Tibial artery (tissue), 4 donors: ENCODE measurements at regions of chr22 and their contacts with region 1.

Region 1: DNA sequence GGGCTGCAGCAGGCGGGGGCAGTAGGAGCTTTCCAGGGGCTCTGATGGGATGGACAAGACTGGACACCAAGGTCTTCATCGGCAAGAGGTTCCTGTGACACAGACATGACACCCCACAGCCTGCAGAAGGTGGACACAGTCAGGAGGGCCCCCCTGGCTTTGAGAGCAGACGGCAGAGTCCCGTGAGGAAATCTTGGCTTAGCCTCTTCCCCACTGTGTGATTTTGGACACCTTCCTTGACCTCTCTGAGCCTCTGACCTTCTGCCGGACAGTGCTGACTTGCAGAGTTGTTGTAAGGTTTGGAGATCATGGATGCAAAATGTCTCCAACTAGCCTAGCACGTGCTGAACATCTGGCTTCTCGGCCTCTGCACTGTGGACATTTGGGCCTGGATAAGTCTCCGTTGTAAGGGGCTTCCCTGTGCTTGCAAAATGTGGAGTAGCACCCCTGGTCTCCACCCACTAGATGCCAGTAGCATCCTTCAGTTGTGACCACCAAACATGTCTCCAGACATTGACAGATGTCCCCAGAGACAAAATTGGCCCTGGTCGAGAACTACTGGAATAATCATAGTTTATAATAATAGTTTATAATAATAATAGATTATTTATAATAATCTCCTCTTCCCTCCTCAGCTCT is 54.6 kb downstream of the MCM5 start:
- DNase-seq: no peak
- H3K4me3 ChIP-seq: no peak overlapping the region
- H3K27ac ChIP-seq: no peak overlapping the region
- H3K4me1 ChIP-seq: no peaks in the 10 kb centered on the region
- H3K27me3 ChIP-seq: no peaks in the 10 kb centered on the region
- CTCF ChIP-seq: peak in 1 of 2 experiments; percentile 18

Region 2: DNA sequence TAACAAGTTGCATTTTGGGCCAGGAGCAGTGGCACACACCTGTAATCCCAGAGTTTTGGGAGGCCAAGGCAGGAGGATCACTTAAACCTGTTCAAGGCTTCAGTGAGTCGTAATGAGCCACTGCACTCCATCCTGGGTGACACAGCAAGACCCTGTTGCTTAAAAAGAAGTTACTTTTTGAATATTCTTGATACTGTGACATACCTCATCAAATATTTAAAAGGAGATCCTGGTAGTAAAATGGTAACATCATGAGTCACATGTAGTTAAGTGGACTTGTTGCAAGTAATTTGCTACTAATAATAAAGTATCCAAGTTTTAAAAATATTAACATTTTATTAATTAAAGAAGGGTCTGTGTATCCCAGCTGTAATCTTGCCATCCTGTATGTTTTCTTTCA is 179.0 kb before region 1 on chr22:
- intact Hi-C with region 1: no loop called
- DNase-seq: no peak
- H3K4me3 ChIP-seq: no peak overlapping the region
- H3K27ac ChIP-seq: no peak overlapping the region
- H3K4me1 ChIP-seq: no peaks in the 10 kb centered on the region
- H3K27me3 ChIP-seq: no peaks in the 10 kb centered on the region
- CTCF ChIP-seq: no peak

Region 3: DNA sequence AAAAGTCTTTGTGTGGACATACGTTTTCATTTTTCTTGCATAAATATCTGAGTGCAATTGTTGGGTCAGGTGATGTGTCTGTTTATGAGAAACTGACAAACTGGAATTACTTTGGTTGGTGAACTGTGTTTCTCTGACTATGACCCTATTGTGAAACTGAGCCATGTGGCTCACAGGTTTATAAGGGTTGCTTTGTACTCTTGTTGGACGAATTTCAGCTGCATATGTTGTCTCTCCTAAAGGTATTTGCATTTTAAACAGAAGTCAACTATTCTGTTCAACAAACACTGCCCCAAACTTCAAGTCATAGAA is 51.7 kb after region 1 on chr22:
- intact Hi-C with region 1: loop called (anchors 5 kb)
- DNase-seq: no peak
- H3K4me3 ChIP-seq: no peak overlapping the region
- H3K27ac ChIP-seq: no peak overlapping the region
- H3K4me1 ChIP-seq: no peaks in the 10 kb centered on the region
- H3K27me3 ChIP-seq: peaks cover 0 to 30% of the 10 kb centered on the region in 2 donors
- CTCF ChIP-seq: no peak

Region 4: GRCh38 chr22:35727436-35727835 is 272.9 kb after region 1 on chr22:
- intact Hi-C with region 1: no loop called
- DNase-seq: no peak
- H3K4me3 ChIP-seq: no peak overlapping the region
- H3K27ac ChIP-seq: no peak overlapping the region
- H3K4me1 ChIP-seq: no peaks in the 10 kb centered on the region
- H3K27me3 ChIP-seq: peaks cover 0 to 7% of the 10 kb centered on the region in 2 donors
- CTCF ChIP-seq: no peak